Endothelial cell of umbilical vein (primary cell): ENCODE measurements at regions of chr15 and their contacts with region 1.

Region 1: DNA sequence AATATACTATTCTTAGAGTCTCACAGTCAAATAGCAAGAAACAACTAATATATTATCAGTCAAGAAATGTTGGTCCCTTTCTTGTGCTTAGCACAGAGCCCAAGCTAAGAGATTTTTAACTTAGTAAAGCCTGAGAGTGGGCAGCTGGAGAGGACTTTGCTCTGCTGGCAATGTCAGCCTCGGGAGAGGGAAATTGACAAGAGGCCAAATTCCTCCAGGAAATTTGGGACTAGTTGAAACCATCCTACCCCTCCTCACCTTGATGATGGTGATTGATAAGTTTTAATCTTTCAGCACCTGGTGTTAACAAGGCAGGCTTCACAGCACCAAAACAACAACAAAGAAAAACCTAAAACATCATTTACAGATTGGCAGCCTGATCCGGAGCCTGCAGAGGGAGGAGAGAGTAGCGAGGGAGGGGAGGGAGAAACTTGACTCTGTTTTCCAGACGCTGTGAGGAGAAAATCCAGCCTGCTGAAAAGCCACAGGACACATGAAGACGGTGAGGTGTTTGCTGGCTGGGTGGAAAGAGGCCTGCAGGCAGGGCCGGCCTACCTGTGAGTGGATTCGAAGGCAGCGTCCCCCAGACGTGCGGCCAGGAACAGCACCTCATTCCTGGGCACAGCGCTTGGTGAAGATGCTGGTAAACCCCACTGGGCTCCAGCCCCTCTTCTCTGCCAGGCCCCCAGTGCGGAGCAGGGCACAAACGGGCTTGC is 150.9 kb downstream of the LRRC28 start:
- DNase-seq: no peak
- H3K4me3 ChIP-seq: no peak overlapping the region
- H3K27ac ChIP-seq: no peak overlapping the region
- H3K4me1 ChIP-seq: no peaks in the 10 kb centered on the region
- H3K27me3 ChIP-seq: no peaks in the 10 kb centered on the region
- CTCF ChIP-seq: no peak
- POLR2A ChIP-seq: no peak

Region 2: GRCh38 chr15:99424978-99425656 is 22.9 kb after region 1 on chr15:
- CTCF ChIA-PET with region 1: no interaction called
- POLR2A ChIA-PET with region 1: no interaction called
- dilution Hi-C with region 1: no loop called
- intact Hi-C with region 1: loop called (anchors 1 kb)
- DNase-seq: peak; percentile 88
- H3K4me3 ChIP-seq: no peak overlapping the region
- H3K27ac ChIP-seq: peak overlapping the region; percentile 88
- H3K4me1 ChIP-seq: peaks cover 19% of the 10 kb centered on the region
- H3K27me3 ChIP-seq: no peaks in the 10 kb centered on the region
- CTCF ChIP-seq: no peak
- POLR2A ChIP-seq: no peak

Region 3: GRCh38 chr15:99507504-99508310 is 105.5 kb after region 1 on chr15:
- CTCF ChIA-PET with region 1: interaction called, 3 read pairs
- POLR2A ChIA-PET with region 1: no interaction called
- dilution Hi-C with region 1: no loop called
- intact Hi-C with region 1: loop called (anchors 5 kb)
- DNase-seq: peak; percentile 82
- H3K4me3 ChIP-seq: no peak overlapping the region
- H3K27ac ChIP-seq: peak overlapping the region; percentile 10
- H3K4me1 ChIP-seq: peaks cover 30% of the 10 kb centered on the region
- H3K27me3 ChIP-seq: no peaks in the 10 kb centered on the region
- CTCF ChIP-seq: no peak
- POLR2A ChIP-seq: no peak

Region 4: GRCh38 chr15:99719096-99719541 is 316.9 kb after region 1 on chr15:
- CTCF ChIA-PET with region 1: no interaction called
- POLR2A ChIA-PET with region 1: no interaction called
- dilution Hi-C with region 1: no loop called
- intact Hi-C with region 1: no loop called
- DNase-seq: no peak
- H3K4me3 ChIP-seq: no peak overlapping the region
- H3K27ac ChIP-seq: no peak overlapping the region
- H3K4me1 ChIP-seq: no peaks in the 10 kb centered on the region
- H3K27me3 ChIP-seq: no peaks in the 10 kb centered on the region
- CTCF ChIP-seq: no peak
- POLR2A ChIP-seq: no peak